Endothelial cell of umbilical vein (primary cell): ENCODE measurements at regions of chr13 and their contacts with region 1.

Region 1: GRCh38 chr13:39892721-39893685 is 237.5 kb downstream of the COG6 start:
- DNase-seq: peak; percentile 95
- H3K4me3 ChIP-seq: peak overlapping the region in 1 of 3 experiments; percentile 6
- H3K27ac ChIP-seq: peak overlapping the region; percentile 86
- H3K4me1 ChIP-seq: peaks cover 52% of the 10 kb centered on the region
- H3K27me3 ChIP-seq: no peaks in the 10 kb centered on the region
- CTCF ChIP-seq: no peak
- POLR2A ChIP-seq: no peak

Region 2: DNA sequence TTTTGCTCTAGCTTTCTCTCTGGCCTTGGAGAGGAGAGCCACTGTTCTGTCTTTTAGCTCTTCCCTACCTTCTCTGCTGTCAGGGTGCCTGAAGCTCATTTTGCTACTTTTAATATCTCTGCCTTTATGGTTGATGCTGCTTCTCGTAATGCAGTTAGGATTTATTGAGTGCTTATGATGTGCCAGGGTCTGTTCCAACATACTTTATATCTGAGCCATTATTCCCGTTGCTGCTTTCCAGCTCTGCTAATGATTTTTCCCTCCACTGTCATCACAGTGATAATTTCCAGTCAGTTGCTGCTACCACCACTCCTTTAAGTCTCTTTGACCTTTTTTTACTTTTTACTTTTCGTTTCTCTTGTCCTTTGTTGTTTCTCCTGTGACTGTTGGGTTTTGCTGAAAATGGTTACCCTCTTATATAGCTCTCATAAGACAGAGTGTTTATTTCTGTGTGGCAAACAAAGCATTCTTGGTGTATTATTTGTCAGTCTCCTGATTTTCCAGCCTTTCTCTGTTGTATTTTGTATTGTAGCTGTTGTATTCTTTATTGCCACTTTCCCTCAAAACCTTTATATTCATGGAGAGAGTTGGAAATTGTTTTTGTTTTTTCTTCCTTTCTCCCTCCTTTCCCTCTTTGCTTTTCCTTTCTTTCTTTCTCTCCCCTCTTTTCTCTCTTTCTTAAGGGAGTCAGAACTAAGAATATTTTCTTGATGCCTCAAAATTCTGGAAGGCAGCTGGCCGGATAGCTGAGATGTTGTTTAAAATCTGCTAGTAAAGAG is 200.2 kb before region 1 on chr13:
- CTCF ChIA-PET with region 1: no interaction called
- POLR2A ChIA-PET with region 1: no interaction called
- dilution Hi-C with region 1: no loop called
- intact Hi-C with region 1: no loop called
- DNase-seq: no peak
- H3K4me3 ChIP-seq: no peak overlapping the region
- H3K27ac ChIP-seq: no peak overlapping the region
- H3K4me1 ChIP-seq: no peaks in the 10 kb centered on the region
- H3K27me3 ChIP-seq: no peaks in the 10 kb centered on the region
- CTCF ChIP-seq: no peak
- POLR2A ChIP-seq: no peak

Region 3: DNA sequence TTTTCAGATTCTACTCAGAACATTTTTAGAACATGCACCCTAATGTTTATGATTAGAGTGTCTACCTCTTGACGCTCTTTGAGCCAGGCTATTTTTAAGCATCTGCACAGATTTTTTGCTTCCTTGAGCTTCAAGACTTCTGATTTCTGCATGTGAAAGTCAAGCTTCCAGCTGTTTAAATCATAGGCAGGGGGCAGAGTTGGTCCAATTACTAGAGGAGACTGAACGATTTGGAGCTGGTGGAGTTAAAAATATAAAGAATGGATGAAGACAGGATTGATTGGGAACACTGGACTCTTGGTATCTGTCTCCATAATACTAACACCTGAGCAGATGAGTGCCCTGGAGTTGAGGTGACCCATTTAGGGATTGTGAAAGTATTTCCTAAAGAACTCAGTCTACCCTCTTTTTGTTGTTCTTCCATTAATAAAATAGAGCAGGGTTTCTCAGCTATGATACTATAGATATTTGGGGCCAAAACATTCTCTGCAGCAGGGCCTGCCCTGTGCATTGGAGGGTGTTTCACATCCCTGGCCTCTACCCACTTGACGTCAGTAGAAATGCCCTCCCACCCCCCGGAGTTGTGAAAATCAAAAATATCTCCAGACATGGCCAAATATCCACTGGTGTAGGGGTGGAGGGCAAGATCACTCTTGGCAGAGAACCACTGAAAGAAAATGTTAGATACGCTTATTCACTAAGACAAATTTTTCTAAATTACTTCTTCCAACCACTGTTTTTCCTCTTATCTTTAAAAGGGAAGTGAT is 77.5 kb before region 1 on chr13:
- CTCF ChIA-PET with region 1: interaction called, 15 read pairs
- POLR2A ChIA-PET with region 1: no interaction called
- dilution Hi-C with region 1: no loop called
- intact Hi-C with region 1: loop called (anchors 1 kb)
- DNase-seq: peak; percentile 79
- H3K4me3 ChIP-seq: no peak overlapping the region
- H3K27ac ChIP-seq: no peak overlapping the region
- H3K4me1 ChIP-seq: peaks cover 17% of the 10 kb centered on the region
- H3K27me3 ChIP-seq: no peaks in the 10 kb centered on the region
- CTCF ChIP-seq: peak; percentile 10 to 22
- POLR2A ChIP-seq: no peak

Region 4: DNA sequence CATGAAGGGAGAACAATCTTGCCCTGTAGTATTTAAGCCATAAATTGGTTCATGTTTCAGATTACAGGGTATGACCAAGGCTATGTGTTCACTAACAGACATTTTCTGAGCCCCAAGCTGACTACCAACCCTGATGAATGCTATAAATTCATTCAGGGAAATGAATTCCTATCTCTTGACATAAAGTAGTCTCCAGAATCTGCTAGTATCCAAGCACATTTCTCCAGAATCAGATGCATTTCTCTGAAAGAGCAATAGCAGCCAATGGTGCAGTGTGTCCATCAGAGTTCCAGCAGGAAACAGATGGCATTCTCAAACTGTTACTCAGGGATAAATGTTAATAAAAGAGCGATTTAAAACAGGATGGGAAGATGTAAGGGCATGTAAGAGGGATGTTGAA is 11.1 kb before region 1 on chr13:
- CTCF ChIA-PET with region 1: interaction called, 43 read pairs
- POLR2A ChIA-PET with region 1: interaction called, 13 read pairs
- dilution Hi-C with region 1: no loop called
- intact Hi-C with region 1: loop called (anchors 1 kb)
- DNase-seq: peak; percentile 88
- H3K4me3 ChIP-seq: no peak overlapping the region
- H3K27ac ChIP-seq: peak overlapping the region; percentile 90
- H3K4me1 ChIP-seq: peaks cover 53% of the 10 kb centered on the region
- H3K27me3 ChIP-seq: no peaks in the 10 kb centered on the region
- CTCF ChIP-seq: no peak
- POLR2A ChIP-seq: no peak

Region 5: DNA sequence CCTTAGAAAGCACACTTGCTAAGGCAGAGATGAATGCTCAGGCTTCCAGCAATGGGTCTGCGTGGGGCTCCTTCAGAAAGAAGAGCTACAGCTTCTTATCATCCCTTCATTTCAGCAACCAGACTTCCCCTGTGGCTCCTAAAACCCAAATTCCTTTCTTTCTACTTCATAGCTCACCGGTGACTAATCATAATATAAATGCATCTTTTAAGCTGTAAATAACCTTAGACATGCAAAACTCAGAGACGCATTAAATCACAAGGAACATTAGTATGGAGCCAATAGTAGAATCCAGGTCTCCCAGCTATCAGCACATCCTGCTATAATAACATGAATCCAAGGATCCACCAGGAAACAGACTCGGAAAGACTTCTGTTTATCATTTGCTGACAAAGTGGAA is 138.0 kb after region 1 on chr13:
- CTCF ChIA-PET with region 1: no interaction called
- POLR2A ChIA-PET with region 1: no interaction called
- dilution Hi-C with region 1: no loop called
- intact Hi-C with region 1: loop called (anchors 2 kb)
- DNase-seq: peak; percentile 84
- H3K4me3 ChIP-seq: no peak overlapping the region
- H3K27ac ChIP-seq: peak overlapping the region; percentile 95
- H3K4me1 ChIP-seq: peaks cover 19% of the 10 kb centered on the region
- H3K27me3 ChIP-seq: no peaks in the 10 kb centered on the region
- CTCF ChIP-seq: no peak
- POLR2A ChIP-seq: no peak

Region 6: DNA sequence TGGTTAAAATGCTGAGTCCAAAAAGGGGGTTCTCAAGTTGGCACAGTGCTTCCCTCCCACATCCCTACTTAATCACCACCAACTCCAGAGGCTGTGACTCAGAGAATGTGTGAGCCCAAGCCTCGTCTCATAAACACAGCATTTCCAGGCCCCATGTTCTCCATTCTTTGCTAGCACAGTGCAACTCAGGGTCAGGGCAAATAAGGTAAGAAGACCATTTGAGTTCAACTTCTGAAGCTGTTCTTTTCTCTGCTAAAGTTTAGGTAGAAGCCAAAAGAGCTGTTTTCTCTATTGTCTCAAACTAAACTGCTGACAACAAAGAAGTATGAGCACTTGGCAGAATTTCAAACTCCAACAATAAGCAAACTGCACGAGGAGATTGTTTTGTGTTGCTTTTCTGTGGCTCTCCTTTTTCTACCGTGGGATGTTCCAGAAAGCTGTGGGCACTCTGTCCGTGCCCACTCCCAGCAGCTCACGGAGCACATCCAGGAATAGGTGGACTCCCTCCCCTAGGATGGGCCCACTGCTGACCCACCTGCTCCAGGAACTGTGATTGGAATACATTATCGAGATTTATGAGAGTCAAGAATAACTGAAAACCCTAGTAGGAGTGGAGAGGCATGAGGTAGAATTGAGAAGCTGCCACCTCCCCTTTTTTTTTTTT is 256.7 kb after region 1 on chr13:
- CTCF ChIA-PET with region 1: no interaction called
- POLR2A ChIA-PET with region 1: no interaction called
- dilution Hi-C with region 1: no loop called
- intact Hi-C with region 1: loop called (anchors 10 kb)
- DNase-seq: peak; percentile 98
- H3K4me3 ChIP-seq: no peak overlapping the region
- H3K27ac ChIP-seq: peak overlapping the region; percentile 80
- H3K4me1 ChIP-seq: peaks cover 25% of the 10 kb centered on the region
- H3K27me3 ChIP-seq: no peaks in the 10 kb centered on the region
- CTCF ChIP-seq: no peak
- POLR2A ChIP-seq: no peak

Region 7: DNA sequence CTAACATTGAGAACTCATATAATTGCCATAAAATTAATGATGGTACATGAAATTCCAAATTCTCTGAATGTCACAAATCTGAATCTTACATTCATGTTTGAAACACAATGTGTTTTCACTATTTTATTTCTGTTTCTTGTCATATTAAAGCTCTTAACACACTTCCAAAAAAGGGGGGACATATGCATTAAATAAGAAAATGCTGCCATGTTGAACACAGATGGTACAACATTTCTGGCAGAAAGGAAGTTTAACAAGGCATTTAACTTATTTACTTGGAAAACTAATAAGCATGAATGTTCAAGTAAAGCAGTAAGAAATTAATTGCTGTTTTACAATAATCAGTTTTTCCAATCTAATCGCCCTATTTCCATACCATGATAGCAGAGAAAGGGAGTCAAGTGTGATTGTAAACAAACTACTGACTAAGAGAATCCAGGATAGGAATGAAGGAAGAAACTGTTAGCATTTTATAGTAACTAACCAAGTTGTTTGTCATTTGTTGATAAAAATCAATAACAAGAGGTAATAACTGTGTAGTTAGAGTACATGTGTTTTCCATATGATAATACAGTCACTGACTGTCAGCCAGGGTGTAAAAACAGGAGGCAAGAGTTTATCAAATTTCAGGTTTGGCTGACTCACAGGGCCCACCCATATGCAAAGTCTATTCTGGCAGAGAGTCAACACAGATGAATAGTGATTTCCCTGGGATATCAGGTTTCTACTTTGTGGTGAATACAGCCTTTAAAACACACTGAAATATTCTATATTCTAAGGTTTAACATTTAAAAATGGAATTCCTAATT is 779.2 kb after region 1 on chr13:
- CTCF ChIA-PET with region 1: no interaction called
- POLR2A ChIA-PET with region 1: no interaction called
- dilution Hi-C with region 1: no loop called
- intact Hi-C with region 1: loop called (anchors 2 kb)
- DNase-seq: peak; percentile 90
- H3K4me3 ChIP-seq: no peak overlapping the region
- H3K27ac ChIP-seq: peak overlapping the region; percentile 14
- H3K4me1 ChIP-seq: peaks cover 20% of the 10 kb centered on the region
- H3K27me3 ChIP-seq: no peaks in the 10 kb centered on the region
- CTCF ChIP-seq: no peak
- POLR2A ChIP-seq: no peak